Ovary (tissue), 10 donors: ENCODE measurements at regions of chr9 and their contacts with region 1.

Region 1: GRCh38 chr9:91186518-91187108 is 175.1 kb downstream of the AUH start:
- DNase-seq: no peak
- H3K4me3 ChIP-seq: no peak overlapping the region
- H3K27ac ChIP-seq: no peak overlapping the region
- H3K4me1 ChIP-seq: no peaks in the 10 kb centered on the region
- H3K27me3 ChIP-seq: no peaks in the 10 kb centered on the region
- CTCF ChIP-seq: no peak
- EP300 ChIP-seq: no peak
- POLR2A ChIP-seq: no peak

Region 2: DNA sequence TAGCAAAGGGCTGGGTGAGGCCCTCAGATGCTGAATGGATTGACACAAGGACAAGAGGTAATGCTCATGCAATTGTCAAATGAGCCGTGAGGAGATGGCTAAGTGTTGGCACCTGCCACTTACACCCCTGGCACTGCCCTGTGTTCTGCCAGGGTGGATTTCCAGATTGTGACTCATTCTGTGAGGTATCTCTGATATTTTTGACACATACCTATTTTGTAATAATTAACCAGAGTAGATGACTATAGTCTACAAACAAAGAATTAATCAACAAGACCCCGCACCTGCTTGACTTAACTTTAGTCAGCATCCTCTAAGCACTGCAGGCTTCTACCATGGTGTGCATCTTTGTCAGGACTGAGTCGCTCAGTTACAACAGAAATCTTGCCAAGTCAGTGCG is 744.8 kb before region 1 on chr9:
- intact Hi-C with region 1: no loop called
- DNase-seq: no peak
- H3K4me3 ChIP-seq: no peak overlapping the region
- H3K27ac ChIP-seq: no peak overlapping the region
- H3K4me1 ChIP-seq: no peaks in the 10 kb centered on the region
- H3K27me3 ChIP-seq: no peaks in the 10 kb centered on the region
- CTCF ChIP-seq: no peak
- EP300 ChIP-seq: no peak
- POLR2A ChIP-seq: no peak

Region 3: DNA sequence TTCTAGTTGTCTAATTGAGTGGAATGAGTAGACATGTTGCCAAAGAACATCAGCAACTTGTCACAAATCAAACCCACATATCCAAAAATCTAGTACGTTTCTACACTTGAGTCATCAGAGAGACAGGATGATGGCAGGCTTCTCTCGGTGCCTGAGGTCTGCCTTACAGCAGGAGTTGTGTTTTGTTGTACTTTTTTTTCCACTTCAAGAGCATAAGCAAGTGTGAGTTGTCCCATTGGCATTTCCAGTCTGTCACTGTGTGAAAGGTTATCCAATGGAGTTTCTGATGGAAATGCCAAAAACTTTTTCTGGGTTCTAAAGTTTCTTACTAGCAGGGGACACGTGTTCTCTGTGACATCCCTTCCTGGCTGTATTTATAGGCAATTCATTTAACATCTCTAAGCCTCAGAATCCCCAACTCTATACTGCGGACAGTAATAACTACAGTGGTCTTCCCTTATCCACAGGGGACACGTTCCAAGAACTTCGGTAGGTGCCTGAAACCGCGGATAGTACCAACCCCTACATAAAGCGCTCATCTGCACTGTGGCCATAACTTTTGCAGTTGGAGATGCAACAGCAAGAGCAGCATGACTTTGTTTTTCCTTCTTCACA is 138.5 kb before region 1 on chr9:
- intact Hi-C with region 1: loop called in 1 of 4 experiments (anchors 10 kb)
- DNase-seq: no peak
- H3K4me3 ChIP-seq: no peak overlapping the region
- H3K27ac ChIP-seq: no peak overlapping the region
- H3K4me1 ChIP-seq: no peaks in the 10 kb centered on the region
- H3K27me3 ChIP-seq: no peaks in the 10 kb centered on the region
- CTCF ChIP-seq: no peak
- EP300 ChIP-seq: no peak
- POLR2A ChIP-seq: no peak

Region 4: GRCh38 chr9:91164724-91165520 is 21.7 kb before region 1 on chr9:
- intact Hi-C with region 1: no loop called
- DNase-seq: peak in 1 of 5 donors; percentile 45
- H3K4me3 ChIP-seq: no peak overlapping the region
- H3K27ac ChIP-seq: no peak overlapping the region
- H3K4me1 ChIP-seq: no peaks in the 10 kb centered on the region
- H3K27me3 ChIP-seq: no peaks in the 10 kb centered on the region
- CTCF ChIP-seq: no peak
- EP300 ChIP-seq: no peak
- POLR2A ChIP-seq: no peak

Region 5: GRCh38 chr9:92406477-92406876 is 1219.9 kb after region 1 on chr9:
- intact Hi-C with region 1: no loop called
- DNase-seq: no peak
- H3K4me3 ChIP-seq: peak overlapping the region; percentile 9
- H3K27ac ChIP-seq: peak overlapping the region in 1 of 2 donors; percentile 53
- H3K4me1 ChIP-seq: peaks cover 8% of the 10 kb centered on the region
- H3K27me3 ChIP-seq: no peaks in the 10 kb centered on the region
- CTCF ChIP-seq: no peak
- EP300 ChIP-seq: no peak
- POLR2A ChIP-seq: no peak